ENCODE measurements at regions of chr1 and their contacts with region 1.

Region 1: DNA sequence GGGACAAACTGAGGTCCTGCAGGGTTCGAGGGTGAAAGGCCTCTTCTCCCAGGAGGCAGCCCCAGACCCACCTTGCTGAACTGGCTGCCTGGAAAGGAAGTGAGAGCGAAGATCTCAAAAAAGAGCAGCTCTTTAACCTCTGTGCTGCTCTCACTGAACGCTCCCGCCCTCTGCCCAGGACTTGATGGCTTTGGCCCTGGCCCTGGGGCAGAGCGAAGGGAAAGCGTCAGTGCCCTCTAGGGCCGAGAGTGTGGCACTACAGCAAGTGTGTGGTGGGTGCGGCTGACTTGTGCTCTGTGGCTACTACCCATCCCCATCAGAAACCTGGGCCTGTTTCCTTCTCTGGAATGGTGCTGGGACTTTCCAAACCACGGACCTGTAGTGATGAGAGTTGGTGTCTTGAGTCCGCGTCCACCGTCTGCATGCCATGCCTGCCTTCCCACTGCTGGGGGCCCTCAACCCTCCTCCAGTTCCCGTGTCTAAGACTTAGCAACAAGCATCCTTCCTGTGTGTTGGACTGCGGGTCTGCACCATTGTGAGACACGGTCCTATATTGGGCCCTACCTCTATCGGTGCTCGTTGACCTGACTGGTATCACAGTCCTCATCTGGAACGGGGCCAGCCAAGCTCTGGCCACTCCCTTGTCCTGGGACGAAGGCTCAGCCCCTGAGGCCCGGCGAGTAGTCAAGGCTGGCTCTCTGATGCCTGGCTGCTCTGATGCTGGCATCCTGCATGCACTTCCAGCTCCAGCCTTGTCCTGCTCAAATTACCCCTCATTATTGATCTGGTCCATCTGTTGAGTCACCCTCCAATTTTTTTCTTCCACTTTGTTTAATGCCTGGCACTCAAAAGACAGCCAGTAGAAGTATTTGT is 180.3 kb downstream of the DISC1 start:
- DNase-seq: peak; percentile 86
- ATAC-seq: peak; percentile 100
- H3K4me3 Mint-ChIP-seq: no peak overlapping the region
- H3K27ac Mint-ChIP-seq: no peak overlapping the region
- H3K4me1 Mint-ChIP-seq: no peaks in the 10 kb centered on the region
- H3K27me3 Mint-ChIP-seq: no peaks in the 10 kb centered on the region; the same call in 1 of the 2 replicates
- CTCF ChIP-seq: peak; percentile 67; the same call in 1 of the 2 replicates

Region 2: DNA sequence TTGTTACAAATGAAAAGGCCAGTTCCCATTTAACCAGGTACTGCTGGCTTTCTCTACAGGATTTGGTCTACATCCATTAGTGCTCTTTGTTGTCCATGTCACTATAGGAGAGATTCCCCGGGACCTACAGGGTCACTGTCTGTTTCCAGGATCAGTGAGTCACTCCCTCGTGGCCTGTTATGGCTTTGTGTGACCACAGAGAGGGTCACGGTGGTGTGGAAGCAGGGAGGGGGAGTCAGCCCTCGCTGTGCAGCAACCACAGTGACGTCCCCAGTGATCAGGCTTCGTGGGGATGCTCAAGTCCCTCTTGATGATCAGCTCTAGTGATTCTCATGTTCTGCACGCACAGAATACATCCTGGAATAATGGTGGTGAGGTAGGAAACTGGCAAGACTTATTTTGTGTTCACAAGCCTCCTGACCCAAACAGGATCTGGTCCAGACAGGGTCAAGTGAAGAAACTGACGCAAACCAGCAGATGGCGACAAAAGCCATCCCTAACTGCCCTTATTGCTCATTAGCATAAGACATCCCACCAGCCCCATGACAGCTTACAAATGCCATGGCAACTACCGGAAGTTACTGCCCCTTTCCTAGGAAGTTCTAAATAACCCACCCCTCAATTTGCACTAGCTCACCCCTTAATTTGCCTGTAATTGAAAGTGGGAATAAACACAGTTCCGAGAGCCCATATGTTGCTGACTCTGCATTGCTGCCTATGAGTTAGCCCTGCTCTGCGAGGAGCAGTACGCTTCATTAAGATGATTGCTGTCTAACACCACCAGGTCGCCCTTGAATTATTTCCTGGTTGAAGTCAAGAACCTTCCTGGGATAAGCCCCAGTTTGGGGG is 81.8 kb before region 1 on chr1:
- CTCF ChIA-PET with region 1: interaction called, 25 read pairs
- POLR2A ChIA-PET with region 1: no interaction called
- DNase-seq: peak; percentile 70
- ATAC-seq: peak; percentile 99
- H3K4me3 Mint-ChIP-seq: no peak overlapping the region
- H3K27ac Mint-ChIP-seq: no peak overlapping the region
- H3K4me1 Mint-ChIP-seq: no peaks in the 10 kb centered on the region
- H3K27me3 Mint-ChIP-seq: no peaks in the 10 kb centered on the region
- CTCF ChIP-seq: peak; percentile 57; the same call in 1 of the 2 replicates

Region 3: DNA sequence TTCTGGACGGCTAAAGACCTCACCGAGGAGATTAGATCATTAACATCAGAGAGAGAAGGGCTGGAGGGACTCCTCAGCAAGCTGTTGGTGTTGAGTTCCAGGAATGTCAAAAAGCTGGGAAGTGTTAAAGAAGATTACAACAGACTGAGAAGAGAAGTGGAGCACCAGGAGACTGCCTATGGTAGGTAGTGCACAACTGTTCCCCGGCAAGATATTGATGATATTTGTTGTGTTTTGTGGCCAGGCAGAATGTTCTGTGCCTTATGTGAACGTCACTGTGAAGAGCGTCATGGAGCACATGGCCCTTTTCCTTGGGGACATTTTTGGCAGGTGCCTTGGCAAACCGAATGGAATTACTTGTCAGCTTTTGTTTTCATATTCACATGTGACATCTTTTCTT is 11.5 kb after region 1 on chr1:
- CTCF ChIA-PET with region 1: interaction called, 10 read pairs
- POLR2A ChIA-PET with region 1: no interaction called
- DNase-seq: no peak
- ATAC-seq: no peak
- H3K4me3 Mint-ChIP-seq: no peak overlapping the region
- H3K27ac Mint-ChIP-seq: no peak overlapping the region
- H3K4me1 Mint-ChIP-seq: peaks cover 4% of the 10 kb centered on the region; the same call in 1 of the 2 replicates
- H3K27me3 Mint-ChIP-seq: no peaks in the 10 kb centered on the region
- CTCF ChIP-seq: no peak